Sigmoid colon (tissue), 7 donors: ENCODE measurements at regions of chr6 and their contacts with region 1.

Region 1: DNA sequence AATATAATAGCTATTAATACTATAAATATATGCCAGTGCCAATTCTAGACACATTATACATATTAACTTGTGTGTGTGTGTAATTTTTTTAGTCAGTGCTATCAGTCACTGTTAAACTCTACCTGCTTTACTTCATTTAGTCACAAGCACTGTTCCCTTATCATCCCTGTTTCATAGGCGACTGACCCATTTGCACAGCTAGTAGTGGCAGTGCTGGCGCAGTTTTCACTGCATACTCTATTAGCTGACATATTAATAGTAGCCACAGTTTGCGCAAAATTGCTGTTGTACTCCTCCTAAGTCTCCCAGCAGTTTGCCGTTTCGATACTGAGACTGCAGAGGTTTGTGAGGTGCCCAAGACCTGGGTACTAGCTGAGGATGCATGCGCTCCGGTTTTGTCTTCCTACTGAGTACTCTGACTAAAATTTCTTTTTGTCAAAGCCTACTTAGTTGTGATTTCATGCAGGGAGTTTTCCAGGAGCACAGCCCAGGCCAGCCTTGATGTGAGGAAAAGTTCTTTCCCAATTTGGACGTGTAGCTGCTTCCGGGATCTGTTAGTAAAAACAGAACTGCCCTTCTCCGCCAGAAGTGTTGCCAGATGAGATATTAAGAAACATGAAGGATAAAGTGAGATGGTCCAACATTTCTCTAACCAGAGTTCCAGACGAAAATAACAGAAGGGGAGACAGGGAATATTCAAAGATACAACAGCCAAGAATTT is 5.6 kb downstream of the BAG2 start:
- DNase-seq: peak; percentile 93
- H3K4me3 ChIP-seq: peak overlapping the region; percentile 11 to 72 (median 28)
- H3K27ac ChIP-seq: peak overlapping the region; percentile 89 to 99 (median 92)
- H3K4me1 ChIP-seq: peaks cover 0 to 76% (median 71%) of the 10 kb centered on the region in 4 donors
- H3K27me3 ChIP-seq: no peaks in the 10 kb centered on the region
- CTCF ChIP-seq: no peak
- EP300 ChIP-seq: no peak
- POLR2A ChIP-seq: peak in 1 of 2 donors; percentile 35

Region 2: GRCh38 chr6:57190140-57190539 is 12.4 kb after region 1 on chr6:
- intact Hi-C with region 1: loop called (anchors 1 kb)
- DNase-seq: no peak
- H3K4me3 ChIP-seq: no peak overlapping the region
- H3K27ac ChIP-seq: peak overlapping the region in 3 of 4 donors; percentile 23 to 77 (median 72)
- H3K4me1 ChIP-seq: peaks cover 0 to 54% (median 16%) of the 10 kb centered on the region in 4 donors
- H3K27me3 ChIP-seq: no peaks in the 10 kb centered on the region
- CTCF ChIP-seq: peak in 3 of 4 experiments; percentile 37 to 56 (median 45)
- EP300 ChIP-seq: no peak
- POLR2A ChIP-seq: no peak